Breast epithelium (tissue), 4 donors: ENCODE measurements at regions of chr12 and their contacts with region 1.

Region 1: DNA sequence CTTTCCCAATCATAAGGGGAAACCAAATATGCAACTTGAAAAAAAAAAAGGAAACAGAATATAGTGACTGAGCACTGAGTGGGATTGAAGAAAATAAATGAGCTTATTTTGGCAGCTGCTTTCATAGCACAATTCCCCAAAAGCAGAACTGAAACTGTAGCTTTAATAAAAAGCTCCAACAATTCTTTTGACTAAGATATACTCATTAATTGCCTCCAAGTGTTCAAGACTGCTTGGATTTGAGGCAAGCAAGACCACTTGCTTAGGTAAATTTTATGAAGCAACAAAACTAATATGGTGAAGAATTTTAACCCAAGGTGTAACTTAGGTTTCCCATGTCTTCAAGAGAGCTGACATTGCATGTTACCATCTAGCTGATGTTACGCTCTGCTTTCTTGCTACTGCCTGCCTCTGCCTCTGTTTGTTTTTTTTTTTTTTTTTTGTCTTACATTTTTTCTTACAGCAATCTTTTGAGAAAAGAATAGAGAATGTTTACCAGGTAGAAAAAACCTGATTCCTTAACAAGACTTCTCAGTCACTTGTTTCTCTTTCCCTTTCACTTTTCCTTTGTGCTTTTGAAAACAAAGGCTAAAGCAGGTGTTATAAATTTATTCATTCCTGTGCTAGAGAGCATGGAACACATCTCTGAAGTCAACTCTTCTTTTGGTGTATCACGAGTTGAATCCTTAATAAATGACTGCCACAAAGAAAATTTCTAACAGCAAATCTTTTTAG is 134.4 kb downstream of the BCAT1 start:
- DNase-seq: no peak
- H3K4me3 ChIP-seq: no peak overlapping the region
- H3K27ac ChIP-seq: no peak overlapping the region
- H3K4me1 ChIP-seq: no peaks in the 10 kb centered on the region
- H3K27me3 ChIP-seq: no peaks in the 10 kb centered on the region
- CTCF ChIP-seq: no peak
- POLR2A ChIP-seq: no peak

Region 2: GRCh38 chr12:23099604-23100003 is 1714.9 kb before region 1 on chr12:
- intact Hi-C with region 1: loop called (anchors 5 kb)
- DNase-seq: no peak
- H3K4me3 ChIP-seq: no peak overlapping the region
- H3K27ac ChIP-seq: no peak overlapping the region
- H3K4me1 ChIP-seq: no peaks in the 10 kb centered on the region
- H3K27me3 ChIP-seq: no peaks in the 10 kb centered on the region
- CTCF ChIP-seq: no peak
- POLR2A ChIP-seq: no peak

Region 3: GRCh38 chr12:25074954-25075353 is 260.4 kb after region 1 on chr12:
- intact Hi-C with region 1: no loop called
- DNase-seq: no peak
- H3K4me3 ChIP-seq: no peak overlapping the region
- H3K27ac ChIP-seq: no peak overlapping the region
- H3K4me1 ChIP-seq: no peaks in the 10 kb centered on the region
- H3K27me3 ChIP-seq: no peaks in the 10 kb centered on the region
- CTCF ChIP-seq: no peak
- POLR2A ChIP-seq: no peak